Activated naive CD4-positive, alpha-beta T cell treated with anti-CD3 and anti-CD28 coated beads for 36 hours (primary cell): ENCODE measurements at regions of chr12 and their contacts with region 1.

Region 1: DNA sequence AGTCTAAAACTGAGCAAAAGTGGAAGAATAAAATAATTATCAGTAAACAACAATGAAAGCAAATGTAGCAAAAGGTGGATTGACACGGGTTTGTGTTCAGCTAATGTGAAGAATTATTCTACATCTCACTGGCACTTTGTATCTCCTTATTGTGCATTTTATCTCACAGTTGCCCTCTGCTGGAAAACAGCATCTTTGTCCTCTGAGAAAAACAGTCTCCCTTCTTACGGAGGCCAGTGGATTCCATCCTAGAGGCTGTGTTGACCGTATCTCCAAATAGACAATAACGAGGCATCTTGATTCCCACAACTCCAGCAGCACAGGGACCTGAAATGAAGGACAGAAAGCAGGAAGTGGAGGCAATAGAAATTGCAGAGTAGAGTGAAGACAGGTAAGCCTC is 51.3 kb upstream of the PLBD1 start:
- DNase-seq: peak; percentile 25
- H3K4me3 Mint-ChIP-seq: no peak overlapping the region
- H3K27ac Mint-ChIP-seq: no peak overlapping the region
- H3K4me1 Mint-ChIP-seq: peaks cover 2% of the 10 kb centered on the region
- H3K27me3 Mint-ChIP-seq: peaks cover 8% of the 10 kb centered on the region

Region 2: DNA sequence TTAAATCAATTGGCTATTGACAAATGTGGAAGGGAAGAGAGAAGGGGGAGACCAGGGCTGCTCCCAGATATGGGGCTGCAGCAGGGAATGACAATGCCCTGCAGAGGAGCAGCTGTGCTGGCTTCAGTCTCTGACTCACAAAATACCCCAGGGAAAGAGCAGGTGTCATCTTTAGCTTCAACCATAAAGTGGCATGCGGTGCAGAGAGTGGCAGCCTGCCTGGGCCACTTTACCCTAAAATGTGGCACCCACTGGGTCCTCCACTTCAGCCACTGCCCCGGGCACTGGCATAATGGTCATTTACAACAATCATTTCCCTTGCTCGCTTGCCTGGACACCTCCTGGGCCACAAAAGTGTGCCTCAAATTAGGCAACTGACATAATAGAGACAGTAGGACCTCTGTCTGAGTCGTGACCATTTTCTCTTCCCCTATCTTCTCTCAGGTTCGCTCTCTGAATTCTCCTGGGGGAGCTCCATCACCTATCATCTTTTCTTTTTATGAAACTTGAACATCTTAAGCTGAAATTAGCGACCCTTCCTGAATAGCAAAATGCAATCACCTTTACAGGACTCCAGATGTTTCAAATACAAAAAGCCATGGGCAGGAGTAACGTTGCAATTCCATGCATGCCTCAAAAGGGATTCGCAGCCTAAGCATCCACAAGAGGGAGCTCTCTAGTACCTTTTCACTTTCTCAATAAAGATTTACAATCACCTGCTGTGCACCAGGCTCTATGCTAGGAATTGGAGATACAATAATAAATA is 433.4 kb before region 1 on chr12:
- CTCF ChIA-PET with region 1: no interaction called
- intact Hi-C with region 1: loop called (anchors 1 kb)
- DNase-seq: peak; percentile 47
- H3K4me3 Mint-ChIP-seq: no peak overlapping the region
- H3K27ac Mint-ChIP-seq: no peak overlapping the region
- H3K4me1 Mint-ChIP-seq: peaks cover 2% of the 10 kb centered on the region
- H3K27me3 Mint-ChIP-seq: peaks cover 5% of the 10 kb centered on the region

Region 3: DNA sequence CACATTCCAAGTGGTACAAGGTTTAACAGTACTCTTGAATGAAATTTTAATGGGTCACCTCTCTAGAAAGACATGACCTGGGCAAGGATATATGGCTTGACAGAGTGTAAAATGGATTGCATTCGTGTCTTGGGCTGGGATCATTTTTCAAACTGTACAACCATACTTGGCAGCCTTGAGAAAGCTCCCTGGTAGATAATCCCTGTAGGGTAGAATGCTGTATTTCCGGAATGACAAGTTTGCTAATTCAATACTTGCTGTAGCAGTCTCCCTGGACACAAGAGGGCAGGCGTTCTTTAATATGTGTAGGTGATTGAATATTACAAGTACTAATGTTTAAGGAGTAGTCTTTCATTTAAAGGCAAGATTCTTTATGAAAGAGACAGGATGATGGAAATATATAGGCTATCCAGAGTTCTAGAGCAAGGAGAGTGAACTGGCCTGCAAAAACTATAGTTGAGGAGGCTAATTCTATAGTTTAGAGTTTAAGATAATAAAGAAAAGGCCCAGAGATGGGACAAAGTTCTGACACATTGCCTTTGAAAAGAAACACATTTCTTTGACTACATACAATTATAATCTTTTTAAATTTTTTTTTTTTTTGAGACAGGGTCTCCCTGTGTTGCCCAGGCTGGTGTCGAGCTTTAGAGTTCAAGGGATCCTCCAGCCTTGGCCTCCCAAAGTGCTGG is 104.7 kb before region 1 on chr12:
- CTCF ChIA-PET with region 1: interaction called, 3 read pairs
- intact Hi-C with region 1: loop called (anchors 10 kb)
- DNase-seq: no peak
- H3K4me3 Mint-ChIP-seq: no peak overlapping the region
- H3K27ac Mint-ChIP-seq: no peak overlapping the region
- H3K4me1 Mint-ChIP-seq: no peaks in the 10 kb centered on the region
- H3K27me3 Mint-ChIP-seq: no peaks in the 10 kb centered on the region

Region 4: DNA sequence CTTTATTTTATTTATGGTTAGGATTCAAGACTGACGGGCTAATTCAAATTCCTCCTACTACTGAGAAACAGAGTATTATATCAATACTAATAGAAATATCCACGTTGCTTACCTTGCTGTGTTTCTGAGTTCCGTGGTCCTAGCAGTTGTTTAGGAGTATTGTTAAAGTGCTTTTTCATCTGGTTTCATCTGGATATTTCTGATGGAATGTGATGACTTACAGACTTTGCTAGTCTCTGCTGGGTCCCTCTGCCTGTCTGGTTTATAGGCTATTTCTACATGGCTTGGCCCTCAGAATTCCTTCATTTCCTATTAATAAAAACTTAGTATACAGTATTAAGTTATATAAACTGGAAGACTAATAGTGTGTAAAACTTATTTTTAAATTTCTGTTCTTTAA is 195.0 kb after region 1 on chr12 and contains the start of gene SMCO3:
- CTCF ChIA-PET with region 1: no interaction called
- intact Hi-C with region 1: no loop called
- DNase-seq: no peak
- H3K4me3 Mint-ChIP-seq: no peak within 1 kb of the TSS
- H3K27ac Mint-ChIP-seq: no peak within 1 kb of the TSS
- H3K4me1 Mint-ChIP-seq: peaks cover 13% of the 10 kb centered on the region
- H3K27me3 Mint-ChIP-seq: peaks cover 4% of the 10 kb centered on the region
- total RNA-seq, gene SMCO3: not detected